Activated CD4-positive, alpha-beta T cell treated with anti-CD3 and anti-CD28 coated beads for 36 hours (primary cell): ENCODE measurements at regions of chr11 and their contacts with region 1.

Region 1: GRCh38 chr11:96197801-96198701 is 144.9 kb downstream of the MAML2 start:
- DNase-seq: no peak
- ATAC-seq: peak; percentile 50
- H3K4me3 Mint-ChIP-seq: peak overlapping the region; percentile 16
- H3K27ac Mint-ChIP-seq: peak overlapping the region; percentile 91
- H3K4me1 Mint-ChIP-seq: peaks cover 90% of the 10 kb centered on the region
- H3K27me3 Mint-ChIP-seq: no peaks in the 10 kb centered on the region

Region 2: GRCh38 chr11:95680169-95680929 is 517.7 kb before region 1 on chr11:
- CTCF ChIA-PET with region 1: no interaction called
- POLR2A ChIA-PET with region 1: no interaction called
- intact Hi-C with region 1: loop called in 1 of 2 experiments (anchors 10 kb)
- DNase-seq: no peak
- ATAC-seq: peak; percentile 28
- H3K4me3 Mint-ChIP-seq: no peak overlapping the region
- H3K27ac Mint-ChIP-seq: peak overlapping the region; percentile 35
- H3K4me1 Mint-ChIP-seq: peaks cover 81% of the 10 kb centered on the region
- H3K27me3 Mint-ChIP-seq: no peaks in the 10 kb centered on the region

Region 3: GRCh38 chr11:96062134-96062533 is 135.9 kb before region 1 on chr11:
- CTCF ChIA-PET with region 1: interaction called, 3 read pairs
- POLR2A ChIA-PET with region 1: interaction called, 3 read pairs
- intact Hi-C with region 1: loop called in 1 of 2 experiments (anchors 1 kb)
- DNase-seq: peak; percentile 65
- ATAC-seq: peak; percentile 87
- H3K4me3 Mint-ChIP-seq: peak overlapping the region; percentile 42
- H3K27ac Mint-ChIP-seq: peak overlapping the region; percentile 94
- H3K4me1 Mint-ChIP-seq: peaks cover 81% of the 10 kb centered on the region
- H3K27me3 Mint-ChIP-seq: no peaks in the 10 kb centered on the region

Region 4: GRCh38 chr11:96218006-96218405 is 20.0 kb after region 1 on chr11:
- CTCF ChIA-PET with region 1: no interaction called
- POLR2A ChIA-PET with region 1: no interaction called
- intact Hi-C with region 1: no loop called
- DNase-seq: no peak
- ATAC-seq: no peak
- H3K4me3 Mint-ChIP-seq: no peak overlapping the region
- H3K27ac Mint-ChIP-seq: peak overlapping the region; percentile 52
- H3K4me1 Mint-ChIP-seq: peaks cover 87% of the 10 kb centered on the region
- H3K27me3 Mint-ChIP-seq: no peaks in the 10 kb centered on the region

Region 5: DNA sequence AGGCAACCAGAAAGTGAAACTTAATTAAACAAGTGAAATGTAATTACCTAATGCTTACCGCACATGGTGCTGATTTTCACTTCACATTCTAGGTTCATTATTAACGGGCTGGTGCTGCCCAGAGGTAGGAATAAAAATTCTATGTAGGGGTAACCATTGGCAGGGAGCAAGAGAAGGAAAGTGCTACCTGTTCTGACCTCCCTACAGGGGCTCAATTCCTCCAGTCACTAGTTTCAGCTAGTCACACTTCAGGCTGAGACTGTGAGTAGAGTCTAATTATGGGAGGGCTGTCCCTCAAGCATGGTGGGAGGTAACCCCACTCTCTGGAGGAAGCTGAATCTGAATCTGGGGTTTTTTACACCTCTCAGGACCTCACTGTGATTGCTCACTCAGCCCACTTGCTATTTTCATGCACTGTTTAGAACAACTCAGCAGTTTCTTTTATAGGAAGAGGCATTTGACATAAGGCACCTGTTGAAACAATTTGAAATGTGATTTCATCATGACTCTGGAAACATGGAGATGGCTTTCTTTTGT is 69.5 kb after region 1 on chr11:
- CTCF ChIA-PET with region 1: no interaction called
- POLR2A ChIA-PET with region 1: no interaction called
- intact Hi-C with region 1: loop called in 1 of 2 experiments (anchors 1 kb)
- DNase-seq: peak; percentile 69
- ATAC-seq: peak; percentile 94
- H3K4me3 Mint-ChIP-seq: peak overlapping the region; percentile 20
- H3K27ac Mint-ChIP-seq: peak overlapping the region; percentile 93
- H3K4me1 Mint-ChIP-seq: peaks cover 82% of the 10 kb centered on the region
- H3K27me3 Mint-ChIP-seq: no peaks in the 10 kb centered on the region

Region 6: DNA sequence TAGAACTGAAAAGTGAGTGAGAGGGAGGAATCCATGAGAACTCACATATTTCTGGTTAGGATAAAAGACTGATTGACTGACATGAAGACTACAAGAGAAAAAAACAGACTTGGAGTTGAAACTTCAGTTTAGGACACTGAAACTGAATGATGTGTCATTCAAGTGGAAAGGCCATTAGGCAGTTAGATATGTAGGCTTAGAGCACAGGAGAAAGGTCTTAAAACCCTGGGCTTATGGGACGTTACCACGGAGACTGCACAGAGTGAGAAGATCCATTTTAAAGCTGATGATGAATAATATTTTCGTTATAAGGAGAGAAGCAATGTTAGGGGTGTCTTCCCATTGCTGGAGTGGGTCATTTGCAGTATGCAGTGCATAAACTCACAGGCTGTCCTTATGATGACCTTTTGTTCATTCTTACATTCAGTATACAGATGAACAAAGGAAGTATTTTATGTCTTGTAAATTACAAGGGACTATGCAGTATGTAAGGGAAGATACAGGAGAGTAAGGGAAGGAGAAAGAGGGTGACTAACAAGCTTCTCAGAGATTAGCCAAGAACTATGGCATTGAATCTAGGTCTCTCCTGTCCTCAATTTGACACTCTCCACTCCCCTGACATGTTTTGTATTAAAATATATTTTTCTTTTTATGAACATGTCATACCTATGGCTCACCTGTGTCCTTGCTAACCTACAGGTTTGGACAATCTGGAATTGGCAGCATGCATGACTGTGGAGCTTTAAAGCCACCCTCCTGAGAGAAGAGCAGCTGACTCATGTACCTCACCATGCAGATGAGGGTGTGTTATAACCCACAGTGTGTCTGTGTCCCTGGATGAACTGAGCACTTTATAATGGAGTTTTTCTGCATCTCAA is 81.2 kb after region 1 on chr11:
- CTCF ChIA-PET with region 1: no interaction called
- POLR2A ChIA-PET with region 1: no interaction called
- intact Hi-C with region 1: no loop called
- DNase-seq: no peak
- ATAC-seq: peak; percentile 88
- H3K4me3 Mint-ChIP-seq: no peak overlapping the region
- H3K27ac Mint-ChIP-seq: peak overlapping the region; percentile 43
- H3K4me1 Mint-ChIP-seq: peaks cover 66% of the 10 kb centered on the region
- H3K27me3 Mint-ChIP-seq: no peaks in the 10 kb centered on the region

Region 7: DNA sequence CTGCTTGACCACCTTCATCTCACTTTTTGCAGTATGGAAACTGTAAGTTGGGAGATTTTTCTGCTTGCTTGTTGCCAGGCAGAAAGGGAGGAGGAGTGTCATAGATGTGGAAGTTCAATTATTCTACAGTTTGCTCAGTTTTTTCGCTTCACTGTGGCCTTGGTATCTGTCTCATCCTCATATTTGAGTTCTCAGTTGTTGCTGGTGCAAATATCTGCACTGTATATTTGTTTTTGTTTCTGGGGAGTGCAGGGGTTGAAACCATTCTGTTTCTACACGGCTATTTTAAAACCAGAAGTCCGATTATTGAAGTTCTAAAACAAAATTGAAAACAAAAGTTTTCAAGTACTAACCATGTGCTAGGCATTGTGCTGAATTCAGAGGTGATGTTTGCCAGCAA is 345.1 kb after region 1 on chr11:
- CTCF ChIA-PET with region 1: no interaction called
- POLR2A ChIA-PET with region 1: no interaction called
- intact Hi-C with region 1: no loop called
- DNase-seq: no peak
- ATAC-seq: no peak
- H3K4me3 Mint-ChIP-seq: no peak overlapping the region
- H3K27ac Mint-ChIP-seq: no peak overlapping the region
- H3K4me1 Mint-ChIP-seq: no peaks in the 10 kb centered on the region
- H3K27me3 Mint-ChIP-seq: peaks cover 8% of the 10 kb centered on the region